ENCODE measurements at regions of chrX and their contacts with region 1.

Region 1: GRCh38 chrX:14573146-14573545 is 43.8 kb downstream of the GLRA2 start:
- DNase-seq: no peak
- H3K4me3 ChIP-seq: no peak overlapping the region
- H3K27ac ChIP-seq: no peak overlapping the region
- H3K4me1 ChIP-seq: no peaks in the 10 kb centered on the region
- H3K27me3 ChIP-seq: peaks cover 2% of the 10 kb centered on the region
- CTCF ChIP-seq: no peak
- EP300 ChIP-seq: no peak
- POLR2A ChIP-seq: no peak

Region 2: DNA sequence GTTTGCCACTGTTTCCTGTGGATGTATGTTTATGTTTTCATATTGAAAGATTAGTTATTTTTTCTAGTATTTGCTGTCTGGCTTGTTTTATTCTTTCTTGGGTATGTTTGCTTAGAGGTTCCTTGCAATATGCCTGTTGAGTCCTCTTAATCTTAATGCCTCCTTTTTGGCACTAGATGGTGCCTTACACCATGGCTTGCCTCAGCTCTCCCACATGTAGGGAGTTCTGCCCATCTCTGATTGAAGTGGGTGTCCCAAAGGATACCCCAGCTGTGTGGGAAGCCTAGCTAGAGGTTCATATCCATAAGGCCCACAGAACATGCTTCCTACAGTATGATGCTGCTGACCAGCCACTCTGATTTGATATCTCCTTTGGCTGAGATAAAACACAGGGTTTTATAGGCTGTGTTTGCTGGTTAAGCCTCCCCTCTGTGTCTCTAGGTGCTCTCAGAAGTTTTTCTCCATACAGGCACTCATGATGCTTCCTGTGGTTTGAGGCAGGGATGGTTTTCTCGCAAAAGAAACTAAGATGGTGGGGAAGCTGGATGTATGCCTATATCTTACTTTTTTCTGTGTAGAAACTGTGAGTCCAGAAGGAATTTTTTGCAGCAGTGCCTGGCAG is 534.3 kb after region 1 on chrX:
- intact Hi-C with region 1: loop called in 1 of 4 experiments (anchors 5 kb)
- DNase-seq: no peak
- H3K4me3 ChIP-seq: no peak overlapping the region
- H3K27ac ChIP-seq: no peak overlapping the region
- H3K4me1 ChIP-seq: no peaks in the 10 kb centered on the region
- H3K27me3 ChIP-seq: no peaks in the 10 kb centered on the region
- CTCF ChIP-seq: no peak
- EP300 ChIP-seq: no peak
- POLR2A ChIP-seq: no peak

Measured in ovary (tissue), 10 donors.